PC-9 (cell line): ENCODE measurements at regions of chr2 and their contacts with region 1.

Region 1: GRCh38 chr2:88913280-88913679 is 221.8 kb downstream of the RPIA start:
- DNase-seq: no peak
- H3K4me3 ChIP-seq: no peak overlapping the region
- H3K27ac ChIP-seq: no peak overlapping the region
- H3K4me1 ChIP-seq: no peaks in the 10 kb centered on the region
- H3K27me3 ChIP-seq: 0 out of 2 replicates have a peak, but pooled peaks cover 6% of the 10 kb centered on the region
- CTCF ChIP-seq: no peak

Region 2: DNA sequence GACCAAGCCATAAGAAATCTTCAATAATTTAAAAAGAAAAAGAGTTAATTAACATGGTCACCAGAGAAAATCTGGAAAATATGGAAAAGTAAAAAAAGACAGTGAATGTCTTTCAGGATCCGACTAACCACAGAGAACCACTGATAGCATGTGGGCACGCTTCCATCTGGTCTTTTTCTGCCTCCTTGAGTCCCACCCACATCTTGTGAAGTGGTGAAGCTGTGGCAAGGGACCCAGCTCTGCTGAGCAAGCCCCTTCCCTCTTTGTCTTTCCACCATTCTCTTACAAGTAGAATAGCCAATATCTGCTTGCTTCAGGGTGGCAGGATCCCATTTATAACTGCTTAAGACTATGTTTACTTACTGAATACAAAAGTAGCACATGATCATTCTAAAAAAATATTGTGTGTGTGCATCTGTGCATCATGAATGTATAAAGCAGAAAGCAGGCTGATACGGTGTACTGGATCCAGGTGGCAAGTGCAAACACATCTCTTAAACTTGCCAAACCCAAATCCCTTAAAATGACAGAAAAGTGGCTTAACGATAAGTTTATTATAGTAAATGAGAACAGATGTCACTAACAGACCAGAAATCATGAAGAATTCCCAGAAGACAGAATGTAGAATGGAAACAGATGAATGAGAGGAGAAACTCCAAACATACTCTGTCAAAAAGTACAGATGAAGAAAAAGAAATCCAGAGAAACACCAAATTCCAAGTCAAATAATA is 513.1 kb before region 1 on chr2:
- CTCF ChIA-PET with region 1: no interaction called
- POLR2A ChIA-PET with region 1: no interaction called
- intact Hi-C with region 1: no loop called
- DNase-seq: no peak
- H3K4me3 ChIP-seq: no peak overlapping the region
- H3K27ac ChIP-seq: no peak overlapping the region
- H3K4me1 ChIP-seq: no peaks in the 10 kb centered on the region
- H3K27me3 ChIP-seq: peaks cover 60% of the 10 kb centered on the region
- CTCF ChIP-seq: no peak

Region 3: GRCh38 chr2:88925770-88926462 is 12.6 kb after region 1 on chr2:
- CTCF ChIA-PET with region 1: no interaction called
- POLR2A ChIA-PET with region 1: no interaction called
- intact Hi-C with region 1: loop called (anchors 2 kb)
- DNase-seq: no peak
- H3K4me3 ChIP-seq: no peak overlapping the region
- H3K27ac ChIP-seq: no peak overlapping the region
- H3K4me1 ChIP-seq: no peaks in the 10 kb centered on the region
- H3K27me3 ChIP-seq: peaks cover 4% of the 10 kb centered on the region; the same call in 1 of the 2 replicates
- CTCF ChIP-seq: no peak